ENCODE measurements at regions of chr19 and their contacts with region 1.

Region 1: DNA sequence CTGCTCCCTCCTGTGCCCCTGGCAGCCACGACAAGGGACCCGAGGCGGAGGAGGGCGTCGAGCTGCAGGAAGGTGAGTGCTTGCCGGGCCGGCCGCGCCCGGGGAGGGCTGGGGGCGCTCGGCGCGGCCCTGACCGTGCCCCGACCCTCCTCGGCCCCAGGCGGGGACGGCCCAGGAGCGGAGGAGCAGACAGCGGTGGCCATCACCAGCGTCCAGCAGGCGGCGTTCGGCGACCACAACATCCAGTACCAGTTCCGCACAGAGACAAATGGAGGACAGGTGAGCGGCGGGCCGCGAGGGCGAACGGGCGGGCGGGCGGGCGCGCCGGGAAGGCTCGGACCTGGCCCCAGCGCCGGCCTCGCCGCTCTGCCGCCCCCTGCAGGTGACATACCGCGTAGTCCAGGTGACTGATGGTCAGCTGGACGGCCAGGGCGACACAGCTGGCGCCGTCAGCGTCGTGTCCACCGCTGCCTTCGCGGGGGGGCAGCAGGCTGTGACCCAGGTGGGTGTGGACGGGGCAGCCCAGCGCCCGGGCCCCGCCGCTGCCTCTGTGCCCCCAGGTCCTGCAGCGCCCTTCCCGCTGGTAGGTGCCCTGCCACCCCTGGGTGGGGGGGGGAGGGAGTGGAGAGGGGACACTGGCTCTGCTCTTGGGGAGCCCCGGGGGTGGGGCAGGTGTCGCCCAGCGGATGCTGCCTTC is 807 bp downstream of the USF2 start:
- DNase-seq: peak; percentile 91
- H3K4me3 ChIP-seq: peak overlapping the region in 1 of 3 donors; percentile 68
- H3K27ac ChIP-seq: peak overlapping the region; percentile 87 to 94 (median 91)
- H3K4me1 ChIP-seq: peaks cover 19 to 34% of the 10 kb centered on the region in 2 donors
- H3K27me3 ChIP-seq: no peaks in the 10 kb centered on the region
- CTCF ChIP-seq: peak; percentile 21 to 95 (median 66)
- POLR2A ChIP-seq: peak in 1 of 2 donors; percentile 34

Region 2: GRCh38 chr19:35247526-35248306 is 21.9 kb before region 1 on chr19:
- intact Hi-C with region 1: loop called (anchors 2 kb)
- DNase-seq: peak; percentile 95 to 96
- H3K4me3 ChIP-seq: peak overlapping the region; percentile 75 to 77 (median 77)
- H3K27ac ChIP-seq: peak overlapping the region; percentile 98 to 99 (median 98)
- H3K4me1 ChIP-seq: peaks cover 7 to 9% of the 10 kb centered on the region in 2 donors
- H3K27me3 ChIP-seq: no peaks in the 10 kb centered on the region
- CTCF ChIP-seq: peak; percentile 30 to 79 (median 58)
- POLR2A ChIP-seq: peak in 1 of 2 donors; percentile 54

Region 3: GRCh38 chr19:35612559-35613321 is 343.2 kb after region 1 on chr19 and contains the start of gene HAUS5:
- intact Hi-C with region 1: loop called (anchors 10 kb)
- DNase-seq: peak; percentile 92
- H3K4me3 ChIP-seq: peak within 1 kb of the TSS; percentile 5 to 55 (median 44)
- H3K27ac ChIP-seq: peak within 1 kb of the TSS in 2 of 3 donors; percentile 3 to 51
- H3K4me1 ChIP-seq: peaks cover 9 to 10% of the 10 kb centered on the region in 2 donors
- H3K27me3 ChIP-seq: no peaks in the 10 kb centered on the region
- CTCF ChIP-seq: peak in 1 of 6 experiments; percentile 56
- POLR2A ChIP-seq: peak in 1 of 2 donors; percentile 45
- total RNA-seq, gene HAUS5: 7.9 to 17.8 (median 10.2) TPM